Activated naive CD4-positive, alpha-beta T cell treated with anti-CD3 and anti-CD28 coated beads for 36 hours (primary cell): ENCODE measurements at regions of chr22 and their contacts with region 1.

Region 1: DNA sequence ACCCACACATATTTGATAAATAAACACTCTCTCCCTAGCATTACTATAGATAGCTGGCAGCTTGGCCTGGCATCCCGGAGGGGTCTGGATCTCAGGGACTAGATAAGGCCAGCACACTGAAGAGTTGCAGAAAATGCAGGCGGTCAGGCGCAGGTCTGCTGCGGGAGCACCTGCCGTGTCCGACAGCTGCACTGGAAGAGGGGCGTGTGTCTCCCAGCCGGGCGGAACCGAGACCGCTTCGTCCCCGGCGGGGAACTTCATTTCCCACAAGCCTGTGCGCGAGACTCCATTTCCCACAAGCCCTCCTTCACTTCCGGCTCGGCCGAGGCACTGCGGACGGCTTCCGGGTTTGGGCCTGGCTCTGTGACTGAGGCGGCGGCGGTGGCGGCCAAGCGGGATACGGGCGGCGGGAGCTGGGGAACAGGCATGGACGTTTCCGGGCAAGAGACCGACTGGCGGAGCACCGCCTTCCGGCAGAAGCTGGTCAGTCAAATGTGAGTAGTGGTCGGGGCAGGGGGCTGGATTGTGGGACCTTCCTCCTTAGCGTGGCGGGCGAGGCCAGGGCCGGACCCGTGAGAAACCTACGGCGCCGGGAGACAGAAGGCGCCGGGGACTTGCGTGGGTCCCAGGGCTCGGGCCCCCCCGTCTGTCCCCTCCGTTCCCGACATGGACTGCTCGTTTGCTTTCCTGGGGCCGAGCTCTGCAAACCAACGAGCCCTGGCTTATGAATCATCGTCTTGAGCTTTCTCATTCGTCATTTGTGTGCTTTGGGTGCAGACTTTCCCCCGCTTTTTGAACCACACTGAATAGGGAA is at the start of gene MED15:
- DNase-seq: peak; percentile 94
- H3K4me3 Mint-ChIP-seq: peak within 1 kb of the TSS; percentile 98
- H3K27ac Mint-ChIP-seq: peak within 1 kb of the TSS; percentile 98
- H3K4me1 Mint-ChIP-seq: peaks cover 44% of the 10 kb centered on the region
- H3K27me3 Mint-ChIP-seq: no peaks in the 10 kb centered on the region
- total RNA-seq, gene MED15: 94.7 to 108 TPM

Region 2: GRCh38 chr22:19854778-19855503 is 652.5 kb before region 1 on chr22 and contains the starts of genes GNB1L and RTL10:
- CTCF ChIA-PET with region 1: no interaction called
- intact Hi-C with region 1: loop called (anchors 2 kb)
- DNase-seq: peak; percentile 96
- H3K4me3 Mint-ChIP-seq: peak within 1 kb of the TSS; percentile 95
- H3K27ac Mint-ChIP-seq: peak within 1 kb of the TSS; percentile 98
- H3K4me1 Mint-ChIP-seq: peaks cover 53% of the 10 kb centered on the region
- H3K27me3 Mint-ChIP-seq: no peaks in the 10 kb centered on the region
- total RNA-seq, gene GNB1L: 8.8 to 9.8 TPM
- total RNA-seq, gene RTL10: 10.9 to 11.9 TPM

Region 3: GRCh38 chr22:20319745-20320658 is 187.5 kb before region 1 on chr22 and contains the start of gene DGCR6L:
- CTCF ChIA-PET with region 1: no interaction called
- intact Hi-C with region 1: loop called (anchors 5 kb)
- DNase-seq: peak; percentile 97
- H3K4me3 Mint-ChIP-seq: peak within 1 kb of the TSS; percentile 92
- H3K27ac Mint-ChIP-seq: peak within 1 kb of the TSS; percentile 87
- H3K4me1 Mint-ChIP-seq: peaks cover 60% of the 10 kb centered on the region
- H3K27me3 Mint-ChIP-seq: no peaks in the 10 kb centered on the region
- total RNA-seq, gene DGCR6L: 21.5 TPM

Region 4: GRCh38 chr22:20463324-20464095 is 44.0 kb before region 1 on chr22:
- CTCF ChIA-PET with region 1: no interaction called
- intact Hi-C with region 1: loop called (anchors 2 kb)
- DNase-seq: peak; percentile 34
- H3K4me3 Mint-ChIP-seq: peak overlapping the region; percentile 16
- H3K27ac Mint-ChIP-seq: peak overlapping the region; percentile 87
- H3K4me1 Mint-ChIP-seq: peaks cover 53% of the 10 kb centered on the region
- H3K27me3 Mint-ChIP-seq: no peaks in the 10 kb centered on the region

Region 5: DNA sequence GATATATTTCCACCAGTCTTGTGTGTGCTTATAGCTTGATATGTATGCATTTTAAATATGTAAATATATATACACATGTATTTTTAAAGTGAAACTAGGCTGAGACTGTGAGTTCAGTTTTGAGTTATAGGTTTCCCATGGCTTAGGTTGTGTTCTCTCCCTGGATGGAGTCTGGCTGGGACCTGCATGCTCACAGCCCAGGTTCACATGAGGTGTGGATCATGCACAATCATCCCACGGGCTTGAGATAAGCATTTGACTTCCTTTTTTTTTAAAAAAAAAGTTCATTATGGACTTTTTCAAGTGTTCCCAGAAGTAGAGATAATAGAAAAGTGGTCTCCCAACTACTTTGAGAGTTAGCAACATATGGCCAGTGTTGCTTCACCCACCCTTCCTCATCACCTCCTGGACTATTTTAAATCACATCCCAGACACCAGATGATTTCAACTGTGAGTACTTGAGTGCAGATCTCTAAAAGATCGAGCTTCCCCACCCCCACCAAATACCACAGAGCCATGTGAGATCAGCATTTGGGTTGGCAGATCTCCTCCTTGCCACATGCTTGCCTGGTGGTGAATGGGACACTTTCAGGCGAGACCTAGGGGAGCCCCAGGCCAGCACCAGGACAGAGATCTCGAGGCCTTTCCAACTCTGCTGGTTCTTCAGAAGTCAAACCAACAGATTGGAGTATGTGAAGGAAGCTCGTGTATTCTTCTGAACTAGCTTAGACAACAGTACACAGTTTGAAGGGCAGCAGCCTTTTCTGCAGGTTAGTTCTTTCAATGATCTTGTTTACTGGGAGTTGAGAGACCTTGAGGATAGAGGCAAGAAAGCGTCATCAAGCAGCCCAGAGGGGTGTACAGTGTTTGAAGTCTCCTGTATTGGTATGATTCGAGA is 15.9 kb after region 1 on chr22:
- CTCF ChIA-PET with region 1: interaction called, 3 read pairs
- intact Hi-C with region 1: loop called (anchors 1 kb)
- DNase-seq: peak; percentile 38
- H3K4me3 Mint-ChIP-seq: no peak overlapping the region
- H3K27ac Mint-ChIP-seq: peak overlapping the region; percentile 20
- H3K4me1 Mint-ChIP-seq: peaks cover 78% of the 10 kb centered on the region
- H3K27me3 Mint-ChIP-seq: no peaks in the 10 kb centered on the region

Region 6: GRCh38 chr22:20550821-20551744 is 43.6 kb after region 1 on chr22:
- CTCF ChIA-PET with region 1: interaction called, 5 read pairs
- intact Hi-C with region 1: loop called (anchors 1 kb)
- DNase-seq: peak; percentile 87
- H3K4me3 Mint-ChIP-seq: peak overlapping the region; percentile 70
- H3K27ac Mint-ChIP-seq: peak overlapping the region; percentile 100
- H3K4me1 Mint-ChIP-seq: peaks cover 93% of the 10 kb centered on the region
- H3K27me3 Mint-ChIP-seq: no peaks in the 10 kb centered on the region